ENCODE measurements at regions of chr14 and their contacts with region 1.

Region 1: GRCh38 chr14:20413045-20413799 is at the start of gene TEP1:
- DNase-seq: peak; percentile 90 to 94 (median 94)
- ATAC-seq: peak; percentile 92 to 98 (median 97)
- H3K4me3 ChIP-seq: peak within 1 kb of the TSS; percentile 58 to 98 (median 80)
- H3K27ac ChIP-seq: peak within 1 kb of the TSS; percentile 79 to 98 (median 94)
- H3K4me1 ChIP-seq: peaks cover 0 to 41% (median 9%) of the 10 kb centered on the region in 12 donors
- H3K27me3 ChIP-seq: no peaks in the 10 kb centered on the region
- CTCF ChIP-seq: peak in 1 of 12 donors; percentile 28
- POLR2A ChIP-seq: peak in 1 of 2 donors; percentile 83
- total RNA-seq, gene TEP1: 4.1 to 31.3 (median 9.8) TPM

Region 2: DNA sequence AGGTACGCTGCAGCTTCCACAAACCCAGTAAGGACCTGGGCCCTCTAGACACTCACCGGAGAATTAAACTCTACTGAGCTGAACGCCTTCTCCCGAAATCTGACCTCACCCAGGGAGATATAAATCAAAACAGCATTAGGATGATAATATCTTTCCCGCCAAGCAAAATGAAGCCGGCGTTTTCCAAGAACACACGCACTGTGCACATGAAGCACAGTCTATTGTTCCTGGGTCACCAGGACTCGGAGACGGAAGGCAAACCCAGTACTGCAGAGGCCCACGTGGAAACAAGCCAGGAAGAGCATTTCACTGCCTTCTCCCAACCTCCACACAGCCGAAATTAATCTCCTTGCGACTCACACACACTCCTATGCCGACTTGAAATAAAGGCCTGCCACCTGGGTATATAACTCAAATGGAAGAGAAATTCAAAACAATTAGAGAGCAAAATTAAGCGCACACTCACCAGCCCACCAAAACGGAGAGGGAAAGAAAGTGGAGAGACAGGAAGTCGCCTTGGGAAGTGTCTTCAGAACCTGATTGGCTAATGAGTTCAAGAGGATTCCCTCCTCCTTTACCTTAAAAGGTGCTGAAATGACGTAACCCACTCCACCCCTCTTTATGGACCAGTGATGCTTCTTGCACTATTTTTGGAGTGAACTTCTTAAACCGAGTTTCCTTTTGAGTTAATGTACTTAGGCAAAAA is 80.3 kb before region 1 on chr14 and contains the start of gene CCNB1IP1:
- intact Hi-C with region 1: loop called in 1 of 10 experiments (anchors 5 kb)
- DNase-seq: peak in 4 of 5 donors; percentile 57 to 78 (median 66)
- ATAC-seq: peak; percentile 98 to 99 (median 99)
- H3K4me3 ChIP-seq: peak within 1 kb of the TSS; percentile 17 to 75 (median 68)
- H3K27ac ChIP-seq: peak within 1 kb of the TSS; percentile 59 to 94 (median 88)
- H3K4me1 ChIP-seq: peaks cover 0 to 26% (median 15%) of the 10 kb centered on the region in 12 donors
- H3K27me3 ChIP-seq: no peaks in the 10 kb centered on the region
- CTCF ChIP-seq: no peak
- POLR2A ChIP-seq: no peak
- total RNA-seq, gene CCNB1IP1: 24.5 to 85.6 (median 53.0) TPM

Region 3: DNA sequence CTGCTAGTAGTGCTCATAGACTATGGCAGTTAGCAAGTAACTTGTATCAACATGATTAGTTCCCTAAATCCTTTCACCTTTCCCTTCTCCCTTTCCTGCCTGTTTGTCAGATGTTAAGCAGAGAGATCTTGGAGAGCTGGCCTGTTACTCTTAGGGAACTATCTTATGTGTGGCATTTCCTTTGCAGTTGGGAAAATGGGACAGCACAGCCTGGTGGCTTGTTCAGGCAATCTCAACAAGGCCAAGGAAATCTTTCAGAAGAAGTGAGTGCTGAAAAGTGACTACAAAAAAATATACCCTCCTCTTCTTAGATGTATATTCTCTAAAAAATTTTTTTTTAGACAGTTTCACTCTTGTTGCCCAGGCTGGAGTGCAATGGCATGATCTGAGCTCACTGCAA is 62.4 kb before region 1 on chr14:
- intact Hi-C with region 1: loop called in 1 of 10 experiments (anchors 5 kb)
- DNase-seq: no peak
- ATAC-seq: no peak
- H3K4me3 ChIP-seq: no peak overlapping the region
- H3K27ac ChIP-seq: no peak overlapping the region
- H3K4me1 ChIP-seq: no peaks in the 10 kb centered on the region
- H3K27me3 ChIP-seq: no peaks in the 10 kb centered on the region
- CTCF ChIP-seq: peak in 3 of 12 donors; percentile 7 to 15 (median 12)
- POLR2A ChIP-seq: no peak

Region 4: DNA sequence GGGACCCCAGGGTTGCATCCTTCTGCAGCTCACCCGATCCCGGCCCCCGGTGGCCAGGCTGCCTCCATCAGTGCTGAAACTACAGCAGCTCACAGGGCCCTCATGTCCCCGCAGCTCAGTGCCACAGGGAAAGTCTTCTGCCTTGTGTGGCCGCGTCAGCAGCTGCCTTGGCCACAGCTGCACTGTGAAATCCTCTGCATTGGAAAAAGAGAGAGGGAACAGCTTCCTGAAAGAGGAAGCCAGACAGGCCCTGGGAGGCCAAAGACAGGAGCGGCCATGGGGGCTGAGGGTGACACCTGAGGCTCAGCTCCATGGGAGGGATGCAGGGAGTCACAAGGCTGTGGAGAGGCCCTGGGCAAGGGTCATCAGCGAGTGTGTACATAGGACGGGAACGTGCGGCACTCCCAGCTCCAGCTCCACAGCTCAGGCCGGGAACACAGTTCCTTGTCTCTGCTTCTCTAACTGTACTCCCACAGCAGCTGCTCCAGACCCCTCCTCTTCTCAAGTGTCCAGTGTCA is 37.1 kb before region 1 on chr14:
- intact Hi-C with region 1: no loop called
- DNase-seq: no peak
- ATAC-seq: peak in 1 of 4 donors; percentile 36
- H3K4me3 ChIP-seq: no peak overlapping the region
- H3K27ac ChIP-seq: no peak overlapping the region
- H3K4me1 ChIP-seq: no peaks in the 10 kb centered on the region
- H3K27me3 ChIP-seq: no peaks in the 10 kb centered on the region
- CTCF ChIP-seq: no peak
- POLR2A ChIP-seq: no peak

Region 5: GRCh38 chr14:20454516-20455354 is 41.5 kb after region 1 on chr14 and contains the starts of genes APEX1 and OSGEP:
- intact Hi-C with region 1: loop called in 7 of 10 experiments (anchors 1 to 5 kb)
- DNase-seq: peak; percentile 98 to 99 (median 99)
- ATAC-seq: peak; percentile 95 to 97 (median 96)
- H3K4me3 ChIP-seq: peak within 1 kb of the TSS; percentile 71 to 92 (median 81)
- H3K27ac ChIP-seq: peak within 1 kb of the TSS; percentile 88 to 98 (median 93)
- H3K4me1 ChIP-seq: peaks cover 0 to 53% (median 26%) of the 10 kb centered on the region in 12 donors
- H3K27me3 ChIP-seq: no peaks in the 10 kb centered on the region
- CTCF ChIP-seq: peak in 1 of 12 donors; percentile 6
- POLR2A ChIP-seq: peak in 1 of 2 donors; percentile 89
- total RNA-seq, gene APEX1: 60.4 to 92.6 (median 76.4) TPM
- total RNA-seq, gene OSGEP: 16.1 to 40.9 (median 18.5) TPM

Region 6: GRCh38 chr14:20620798-20621478 is 207.7 kb after region 1 on chr14:
- intact Hi-C with region 1: no loop called
- DNase-seq: no peak
- ATAC-seq: no peak
- H3K4me3 ChIP-seq: no peak overlapping the region
- H3K27ac ChIP-seq: no peak overlapping the region
- H3K4me1 ChIP-seq: peaks cover 0 to 49% (median 7%) of the 10 kb centered on the region in 12 donors
- H3K27me3 ChIP-seq: peaks cover 0 to 9% (median 0%) of the 10 kb centered on the region in 9 donors
- CTCF ChIP-seq: no peak
- POLR2A ChIP-seq: no peak

Region 7: GRCh38 chr14:20652996-20653975 is 240.1 kb after region 1 on chr14:
- intact Hi-C with region 1: no loop called
- DNase-seq: no peak
- ATAC-seq: no peak
- H3K4me3 ChIP-seq: peak overlapping the region in 1 of 12 donors; percentile 4
- H3K27ac ChIP-seq: no peak overlapping the region
- H3K4me1 ChIP-seq: peaks cover 0 to 4% (median 0%) of the 10 kb centered on the region in 12 donors
- H3K27me3 ChIP-seq: peaks cover 33 to 91% (median 67%) of the 10 kb centered on the region in 9 donors
- CTCF ChIP-seq: no peak
- POLR2A ChIP-seq: no peak